Mammary epithelial cell (primary cell): ENCODE measurements at regions of chrX and their contacts with region 1.

Region 1: DNA sequence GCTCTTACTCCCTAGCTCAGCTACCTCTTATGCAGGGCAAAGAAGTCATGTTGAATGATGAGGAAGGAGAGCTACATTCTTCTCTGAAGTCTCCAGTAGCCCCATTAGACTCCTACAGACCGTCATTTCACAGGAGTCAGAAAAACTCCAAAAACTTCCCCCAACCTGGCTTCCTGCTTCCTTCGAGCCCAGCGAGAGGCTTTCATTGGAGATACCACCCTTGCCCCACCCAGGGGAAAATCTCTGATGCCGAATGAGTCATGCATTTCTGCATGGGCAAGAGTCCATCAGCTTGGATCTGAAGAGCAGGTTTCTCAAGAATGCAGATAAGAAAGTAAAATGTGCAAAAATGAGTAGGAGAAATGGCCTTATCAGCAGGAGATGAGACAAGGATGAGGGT is 53.0 kb downstream of the ARSF start:
- DNase-seq: peak; percentile 20
- H3K4me3 ChIP-seq: no peak overlapping the region
- H3K27ac ChIP-seq: no peak overlapping the region
- H3K4me1 ChIP-seq: no peaks in the 10 kb centered on the region
- H3K27me3 ChIP-seq: no peaks in the 10 kb centered on the region
- CTCF ChIP-seq: no peak

Region 2: DNA sequence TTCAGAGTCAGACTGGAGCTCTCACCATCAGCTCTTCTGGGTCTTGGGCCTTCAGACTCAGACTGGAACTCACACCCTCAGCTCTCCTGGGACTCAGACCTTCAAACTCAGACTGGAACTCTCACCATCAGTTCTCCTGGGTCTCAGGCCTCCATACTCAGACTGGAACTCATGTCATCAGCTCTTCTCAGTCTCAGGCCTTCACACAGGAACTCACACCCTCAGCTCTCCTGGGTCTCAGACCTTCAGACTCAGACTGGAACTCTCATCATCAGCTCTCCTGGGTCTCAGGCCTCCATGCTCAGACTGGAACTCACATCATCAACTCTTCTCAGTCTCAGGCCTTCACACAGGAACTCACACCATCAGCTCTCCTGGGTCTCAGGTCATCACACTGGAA is 399.3 kb after region 1 on chrX:
- CTCF ChIA-PET with region 1: no interaction called
- dilution Hi-C with region 1: no loop called
- in situ Hi-C with region 1: no loop called
- intact Hi-C with region 1: loop called (anchors 5 kb)
- DNase-seq: no peak
- H3K4me3 ChIP-seq: no peak overlapping the region
- H3K27ac ChIP-seq: no peak overlapping the region
- H3K4me1 ChIP-seq: no peaks in the 10 kb centered on the region
- H3K27me3 ChIP-seq: no peaks in the 10 kb centered on the region
- CTCF ChIP-seq: no peak